Activated naive CD8-positive, alpha-beta T cell treated with anti-CD3 and anti-CD28 coated beads, Interleukin-2, amount 10 ng/mL, durations not matched to agents 7 days and 5 days (primary cell): ENCODE measurements at regions of chr1 and their contacts with region 1.

Region 1: GRCh38 chr1:28581536-28582247 is 10.4 kb upstream of the RAB42 start:
- DNase-seq: peak; percentile 96
- ATAC-seq: peak; percentile 90
- H3K4me3 Mint-ChIP-seq: peak overlapping the region; percentile 95
- H3K27ac Mint-ChIP-seq: peak overlapping the region; percentile 83
- H3K4me1 Mint-ChIP-seq: peaks cover 26% of the 10 kb centered on the region
- H3K27me3 Mint-ChIP-seq: no peaks in the 10 kb centered on the region

Region 2: GRCh38 chr1:28359592-28360239 is 222.0 kb before region 1 on chr1:
- POLR2A ChIA-PET with region 1: interaction called, 10 read pairs
- DNase-seq: peak; percentile 69
- ATAC-seq: peak; percentile 75
- H3K4me3 Mint-ChIP-seq: no peak overlapping the region
- H3K27ac Mint-ChIP-seq: no peak overlapping the region
- H3K4me1 Mint-ChIP-seq: peaks cover 4% of the 10 kb centered on the region
- H3K27me3 Mint-ChIP-seq: peaks cover 12% of the 10 kb centered on the region

Region 3: DNA sequence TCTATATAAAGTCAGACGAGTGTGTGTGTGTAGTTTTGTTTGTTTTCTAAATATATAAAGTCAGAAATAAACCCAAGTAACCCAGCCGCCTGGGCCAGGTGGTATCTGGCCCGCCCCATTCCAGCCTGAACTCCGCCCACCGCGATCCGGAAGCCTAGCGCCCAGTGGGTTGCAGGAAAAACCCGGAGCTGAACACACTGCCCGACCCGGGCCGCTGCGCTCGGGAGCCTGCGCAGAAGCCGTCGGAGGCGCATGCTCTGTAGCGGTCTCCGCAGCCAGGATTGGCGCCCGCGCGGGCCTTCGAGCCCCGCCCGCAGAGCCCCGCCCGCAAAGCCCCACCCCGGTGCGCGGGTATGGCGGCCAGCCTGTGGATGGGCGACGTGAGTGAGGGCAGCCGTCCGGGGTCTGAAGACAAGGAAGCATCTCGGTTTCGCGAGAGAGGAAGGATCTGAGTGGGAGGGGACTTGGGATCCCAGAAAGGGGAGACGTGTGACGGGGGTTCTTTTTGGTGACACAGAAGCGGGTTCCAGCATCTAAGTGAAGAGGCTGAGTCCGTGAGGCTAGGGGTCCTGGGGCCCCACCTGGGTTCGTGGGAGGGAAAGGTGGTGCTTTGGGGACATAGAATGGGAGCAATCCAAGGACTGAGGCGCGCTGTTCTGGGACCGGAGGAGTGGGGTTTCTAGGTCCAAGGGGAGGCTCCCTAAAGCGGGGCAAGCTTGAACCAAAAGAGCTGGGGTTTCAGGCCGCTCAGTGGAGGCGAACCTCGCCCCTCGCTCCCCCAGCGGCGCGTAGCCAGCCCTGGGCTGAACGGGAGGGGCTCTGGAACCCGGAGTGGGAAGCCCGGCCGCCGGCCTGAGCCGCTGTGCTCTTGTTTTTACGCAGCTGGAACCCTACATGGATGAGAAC is 28.7 kb before region 1 on chr1 and contains the start of gene TRNAU1AP:
- POLR2A ChIA-PET with region 1: interaction called, 59 read pairs
- DNase-seq: peak; percentile 98
- ATAC-seq: peak; percentile 95
- H3K4me3 Mint-ChIP-seq: peak within 1 kb of the TSS; percentile 93
- H3K27ac Mint-ChIP-seq: peak within 1 kb of the TSS; percentile 96
- H3K4me1 Mint-ChIP-seq: peaks cover 20% of the 10 kb centered on the region
- H3K27me3 Mint-ChIP-seq: no peaks in the 10 kb centered on the region
- total RNA-seq, gene TRNAU1AP: 54.2 to 58.9 TPM

Region 4: DNA sequence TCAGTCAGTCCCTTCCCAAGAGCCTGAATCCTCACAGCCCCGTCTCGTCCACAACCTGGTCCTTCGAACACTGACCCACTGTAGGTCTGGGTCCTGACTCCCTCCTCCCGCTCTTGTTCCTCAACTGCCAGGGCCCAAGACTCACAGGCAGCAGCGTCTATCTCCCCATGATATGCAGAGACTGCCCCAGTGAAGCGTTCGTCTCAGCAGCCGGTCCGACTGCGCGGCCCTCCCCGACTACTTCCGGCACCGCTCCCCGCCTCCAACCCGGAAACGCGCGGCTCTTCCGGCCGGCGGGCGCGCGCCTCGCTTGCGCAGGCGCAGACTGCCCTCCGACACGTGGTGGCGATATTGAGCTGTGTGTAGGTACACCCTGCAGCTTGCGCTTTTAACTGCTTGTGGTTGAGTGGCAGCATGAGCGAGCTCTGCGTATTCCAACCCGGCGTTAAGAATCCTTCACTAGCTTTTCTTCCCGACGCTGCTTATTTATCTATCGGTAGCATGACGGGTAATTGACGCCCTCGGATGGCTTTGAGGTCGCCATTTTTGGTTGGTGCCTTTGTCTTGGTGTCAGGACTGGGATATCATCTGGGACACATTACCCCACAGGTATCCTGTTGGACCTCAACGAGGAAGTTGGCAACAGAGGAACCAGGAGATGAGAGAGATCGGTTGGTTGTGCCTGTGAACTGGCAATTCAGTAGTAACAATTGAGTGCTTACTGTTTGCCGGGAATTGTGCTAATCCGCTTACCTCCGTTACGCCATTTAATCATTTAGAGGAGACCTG is 61.3 kb after region 1 on chr1 and contains the start of gene TAF12:
- POLR2A ChIA-PET with region 1: interaction called, 52 read pairs
- DNase-seq: peak; percentile 90
- ATAC-seq: peak; percentile 86
- H3K4me3 Mint-ChIP-seq: peak within 1 kb of the TSS; percentile 98
- H3K27ac Mint-ChIP-seq: peak within 1 kb of the TSS; percentile 99
- H3K4me1 Mint-ChIP-seq: peaks cover 37% of the 10 kb centered on the region
- H3K27me3 Mint-ChIP-seq: no peaks in the 10 kb centered on the region
- total RNA-seq, gene TAF12: 29.9 to 30.5 TPM

Region 5: GRCh38 chr1:28736450-28737306 is 155.0 kb after region 1 on chr1 and contains the start of gene YTHDF2:
- POLR2A ChIA-PET with region 1: interaction called, 30 read pairs
- DNase-seq: peak; percentile 98
- ATAC-seq: peak; percentile 98
- H3K4me3 Mint-ChIP-seq: peak within 1 kb of the TSS; percentile 96
- H3K27ac Mint-ChIP-seq: peak within 1 kb of the TSS; percentile 94
- H3K4me1 Mint-ChIP-seq: peaks cover 22% of the 10 kb centered on the region
- H3K27me3 Mint-ChIP-seq: no peaks in the 10 kb centered on the region
- total RNA-seq, gene YTHDF2: 62.5 to 70.2 TPM